ENCODE measurements at regions of chr9 and their contacts with region 1.

Region 1: DNA sequence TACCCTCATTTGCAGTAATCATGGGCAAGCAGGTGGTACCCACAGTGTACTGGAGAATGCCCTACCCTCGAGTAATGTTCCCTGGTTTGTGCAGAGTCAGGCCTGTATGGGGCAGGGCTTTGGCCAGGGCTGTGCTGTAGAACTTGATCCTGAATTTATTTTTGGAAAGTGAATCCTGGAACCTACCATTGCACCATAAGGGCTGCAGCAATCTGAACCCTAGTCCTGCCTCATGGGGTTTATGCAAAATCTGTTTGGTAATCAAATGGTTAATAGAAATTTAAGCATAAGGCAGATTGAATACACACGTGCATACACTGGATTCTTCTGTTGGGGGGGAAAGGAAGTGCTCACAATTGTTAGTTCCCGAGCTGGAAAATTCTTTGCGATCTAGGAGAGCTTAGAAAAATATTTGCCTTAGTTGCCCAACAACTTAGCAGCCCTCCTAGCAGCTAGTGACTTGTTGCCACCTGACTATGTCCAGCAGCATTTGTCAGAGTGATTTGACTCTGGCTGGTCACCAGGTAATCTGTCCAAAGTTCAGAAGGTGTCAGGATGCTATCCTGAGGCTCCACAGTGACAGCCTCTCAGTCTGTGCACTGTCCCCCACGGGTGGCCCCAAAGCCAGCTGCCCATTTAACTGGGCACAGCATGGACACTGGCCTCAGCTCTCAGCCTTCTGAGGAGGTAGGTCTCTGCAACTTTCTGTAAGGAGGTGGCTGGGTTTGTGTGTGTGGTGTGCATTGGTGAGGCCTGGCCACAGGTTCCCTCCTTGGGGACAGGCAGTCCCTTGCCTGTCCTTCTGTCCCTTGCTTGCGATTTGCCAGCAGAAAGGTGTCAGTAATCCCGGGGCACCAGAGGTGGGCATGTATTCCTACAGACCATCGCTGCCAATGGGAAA is 8.3 kb downstream of the MVB12B start:
- DNase-seq: peak; percentile 86
- H3K4me3 ChIP-seq: no peak overlapping the region
- H3K27ac ChIP-seq: peak overlapping the region; percentile 4
- H3K4me1 ChIP-seq: peaks cover 14% of the 10 kb centered on the region
- H3K27me3 ChIP-seq: no peaks in the 10 kb centered on the region
- CTCF ChIP-seq: no peak
- POLR2A ChIP-seq: peak; percentile 48

Region 2: DNA sequence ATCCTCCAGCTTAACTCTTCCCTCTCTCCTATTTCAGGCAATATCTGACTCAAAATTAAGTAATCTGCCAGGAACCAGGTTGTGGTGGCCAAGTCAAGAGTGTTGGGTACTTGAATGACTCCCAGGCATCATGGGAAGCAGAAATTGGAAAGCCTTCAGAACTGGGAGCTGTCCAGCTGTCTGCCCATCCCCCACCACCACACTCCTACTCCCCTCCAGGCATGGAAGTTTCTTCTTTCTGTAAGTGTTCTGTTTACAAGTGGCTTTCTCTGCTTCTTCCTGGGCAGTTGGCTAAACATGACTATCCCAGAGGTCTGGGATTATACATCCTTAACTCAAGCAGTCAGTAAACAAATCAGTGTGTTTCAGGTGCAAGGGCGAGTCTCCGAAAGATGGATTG is 602.4 kb before region 1 on chr9:
- CTCF ChIA-PET with region 1: no interaction called
- POLR2A ChIA-PET with region 1: no interaction called
- dilution Hi-C with region 1: no loop called
- intact Hi-C with region 1: no loop called
- DNase-seq: no peak
- H3K4me3 ChIP-seq: no peak overlapping the region
- H3K27ac ChIP-seq: no peak overlapping the region
- H3K4me1 ChIP-seq: no peaks in the 10 kb centered on the region
- H3K27me3 ChIP-seq: peaks cover 7 to 8% of the 10 kb centered on the region in 2 experiments
- CTCF ChIP-seq: no peak
- POLR2A ChIP-seq: no peak

Region 3: GRCh38 chr9:126307322-126308061 is 27.5 kb before region 1 on chr9:
- CTCF ChIA-PET with region 1: no interaction called
- POLR2A ChIA-PET with region 1: no interaction called
- dilution Hi-C with region 1: no loop called
- intact Hi-C with region 1: no loop called
- DNase-seq: no peak
- H3K4me3 ChIP-seq: no peak overlapping the region
- H3K27ac ChIP-seq: no peak overlapping the region
- H3K4me1 ChIP-seq: no peaks in the 10 kb centered on the region
- H3K27me3 ChIP-seq: peaks cover 0 to 5% of the 10 kb centered on the region in 2 experiments
- CTCF ChIP-seq: no peak
- POLR2A ChIP-seq: no peak

Region 4: GRCh38 chr9:126375386-126375785 is 40.4 kb after region 1 on chr9:
- CTCF ChIA-PET with region 1: interaction called, 3 read pairs
- POLR2A ChIA-PET with region 1: no interaction called
- dilution Hi-C with region 1: no loop called
- intact Hi-C with region 1: loop called (anchors 1 kb)
- DNase-seq: peak; percentile 65
- H3K4me3 ChIP-seq: no peak overlapping the region
- H3K27ac ChIP-seq: peak overlapping the region; percentile 38
- H3K4me1 ChIP-seq: peaks cover 47% of the 10 kb centered on the region
- H3K27me3 ChIP-seq: no peaks in the 10 kb centered on the region
- CTCF ChIP-seq: no peak
- POLR2A ChIP-seq: no peak

Measured in endothelial cell of umbilical vein (primary cell).